Heart right ventricle (tissue), 16 donors: ENCODE measurements at regions of chr11 and their contacts with region 1.

Region 1: DNA sequence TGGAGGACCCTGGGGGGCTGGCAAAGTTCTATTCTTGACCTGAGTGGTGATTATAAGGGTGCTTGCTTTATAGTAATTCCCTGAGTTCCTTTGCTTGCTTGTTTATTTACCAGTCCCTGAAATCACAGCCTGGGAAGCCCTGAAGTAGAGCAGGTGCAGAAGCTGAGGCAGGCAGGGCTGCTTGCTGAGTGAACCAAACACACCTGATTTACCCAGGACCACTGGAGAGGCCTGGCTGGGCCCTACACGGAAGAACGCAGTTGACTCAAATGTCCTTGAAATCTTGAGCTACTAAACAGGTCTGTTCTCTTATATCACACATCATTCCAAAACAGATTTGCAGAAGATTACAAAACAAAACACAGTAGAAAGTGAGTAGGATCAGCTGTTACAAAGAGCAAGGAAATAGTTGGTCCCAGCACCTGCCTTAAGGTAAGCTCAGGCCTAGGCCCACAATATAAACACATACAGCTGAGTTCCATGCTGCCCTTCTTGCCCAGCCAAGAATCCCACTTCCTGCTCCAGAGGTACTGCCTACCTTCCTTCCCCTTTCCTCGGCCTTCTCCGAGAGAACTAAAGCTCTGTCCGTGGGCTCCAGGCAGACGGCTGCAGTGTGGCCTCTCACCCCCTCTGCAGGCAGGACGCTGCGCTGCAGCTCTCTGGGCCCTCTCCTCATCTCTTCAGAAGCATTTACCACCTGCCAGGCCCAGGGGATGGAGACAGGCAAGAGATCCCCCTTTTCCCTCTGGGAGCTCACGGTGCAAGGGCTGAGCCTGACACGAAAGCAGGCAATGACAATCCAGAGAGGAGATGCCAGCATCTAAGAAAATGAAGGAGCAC is 46.1 kb upstream of the SCUBE2 start:
- DNase-seq: peak; percentile 70 to 71
- ATAC-seq: peak; percentile 82 to 94 (median 90)
- H3K4me3 ChIP-seq: no peak overlapping the region
- H3K27ac ChIP-seq: peak overlapping the region in 3 of 10 donors; percentile 13 to 28 (median 17)
- H3K4me1 ChIP-seq: peaks cover 0 to 35% (median 17%) of the 10 kb centered on the region in 9 donors
- H3K27me3 ChIP-seq: no peaks in the 10 kb centered on the region
- CTCF ChIP-seq: peak; percentile 85 to 97 (median 94)

Region 2: GRCh38 chr11:8917157-8917825 is 220.2 kb before region 1 on chr11:
- intact Hi-C with region 1: loop called in 5 of 10 experiments (anchors 5 to 10 kb)
- DNase-seq: no peak
- ATAC-seq: peak in 5 of 8 donors; percentile 49 to 64 (median 58)
- H3K4me3 ChIP-seq: peak overlapping the region in 1 of 10 donors; percentile 21
- H3K27ac ChIP-seq: peak overlapping the region in 6 of 10 donors; percentile 4 to 74 (median 36)
- H3K4me1 ChIP-seq: peaks cover 0 to 40% (median 28%) of the 10 kb centered on the region in 9 donors
- H3K27me3 ChIP-seq: no peaks in the 10 kb centered on the region
- CTCF ChIP-seq: no peak

Region 3: GRCh38 chr11:9060700-9061111 is 76.8 kb before region 1 on chr11:
- intact Hi-C with region 1: loop called in 1 of 10 experiments (anchors 10 kb)
- DNase-seq: no peak
- ATAC-seq: no peak
- H3K4me3 ChIP-seq: no peak overlapping the region
- H3K27ac ChIP-seq: peak overlapping the region in 1 of 10 donors; percentile 7
- H3K4me1 ChIP-seq: peaks cover 0 to 18% (median 9%) of the 10 kb centered on the region in 9 donors
- H3K27me3 ChIP-seq: no peaks in the 10 kb centered on the region
- CTCF ChIP-seq: peak in 1 of 9 donors; percentile 36